ENCODE measurements at regions of chr9 and their contacts with region 1.

Region 1: DNA sequence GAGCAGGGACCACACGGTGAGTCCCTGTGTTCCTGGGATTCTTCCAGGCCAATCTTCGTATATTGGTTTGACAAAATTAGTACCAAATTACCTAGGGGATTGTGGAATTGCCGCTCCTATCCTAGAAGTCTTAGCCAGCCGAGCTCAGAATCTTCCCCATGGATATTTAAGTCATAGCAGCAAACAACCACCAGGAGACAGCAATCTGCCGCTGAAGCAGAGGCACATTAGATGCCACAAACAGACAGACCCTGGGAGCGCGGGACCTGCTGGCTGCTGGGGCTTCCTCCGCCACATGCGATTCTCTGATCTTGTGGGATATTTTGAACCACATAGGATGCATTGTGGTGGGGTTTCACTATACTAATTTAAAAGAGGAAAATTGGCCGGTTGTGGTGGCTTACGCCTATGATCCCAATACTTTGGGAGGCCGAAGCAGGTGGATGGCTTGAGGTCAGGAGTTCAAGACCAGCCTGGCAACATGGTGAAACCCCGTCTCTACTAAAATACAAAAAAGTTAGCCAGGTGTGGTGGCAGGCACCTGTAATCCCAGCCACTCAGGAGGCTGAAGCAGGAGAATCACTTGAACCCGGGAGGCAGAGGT is 31.7 kb upstream of the ZBTB43 start:
- DNase-seq: peak; percentile 17 to 70
- H3K4me3 ChIP-seq: no peak overlapping the region
- H3K27ac ChIP-seq: no peak overlapping the region
- H3K4me1 ChIP-seq: no peaks in the 10 kb centered on the region
- H3K27me3 ChIP-seq: no peaks in the 10 kb centered on the region
- CTCF ChIP-seq: peak; percentile 61 to 81 (median 77)
- EP300 ChIP-seq: no peak
- POLR2A ChIP-seq: no peak
- RAD21 ChIP-seq: peak; percentile 70 to 75

Region 2: GRCh38 chr9:126745574-126746411 is 27.3 kb before region 1 on chr9:
- CTCF ChIA-PET with region 1: interaction called, 10 read pairs
- POLR2A ChIA-PET with region 1: interaction called, 3 read pairs
- DNase-seq: peak in 1 of 2 experiments; percentile 20
- H3K4me3 ChIP-seq: no peak overlapping the region
- H3K27ac ChIP-seq: no peak overlapping the region
- H3K4me1 ChIP-seq: no peaks in the 10 kb centered on the region
- H3K27me3 ChIP-seq: 0 out of 7 replicates have a peak, but pooled peaks cover 0 to 2% (median under 1%) of the 10 kb centered on the region in 4 experiments
- CTCF ChIP-seq: no peak
- EP300 ChIP-seq: no peak
- POLR2A ChIP-seq: no peak
- RAD21 ChIP-seq: no peak

Region 3: GRCh38 chr9:126756876-126757415 is 16.2 kb before region 1 on chr9:
- CTCF ChIA-PET with region 1: interaction called, 11 read pairs
- POLR2A ChIA-PET with region 1: no interaction called
- DNase-seq: no peak
- H3K4me3 ChIP-seq: no peak overlapping the region
- H3K27ac ChIP-seq: no peak overlapping the region
- H3K4me1 ChIP-seq: no peaks in the 10 kb centered on the region
- H3K27me3 ChIP-seq: no peaks in the 10 kb centered on the region
- CTCF ChIP-seq: no peak
- EP300 ChIP-seq: no peak
- POLR2A ChIP-seq: no peak
- RAD21 ChIP-seq: no peak

Measured in H1 (cell line).